ENCODE measurements at regions of chr7 and their contacts with region 1.

Region 1: GRCh38 chr7:127253281-127254162 is 781 bp upstream of the GRM8 start:
- DNase-seq: no peak
- H3K4me3 ChIP-seq: peak overlapping the region; percentile 71 to 80 (median 76)
- H3K27ac ChIP-seq: peak overlapping the region; percentile 22 to 72 (median 47)
- H3K4me1 ChIP-seq: peaks cover 15 to 36% (median 27%) of the 10 kb centered on the region in 4 donors
- H3K27me3 ChIP-seq: peaks cover 0 to 83% (median 24%) of the 10 kb centered on the region in 4 donors
- CTCF ChIP-seq: peak in 2 of 3 experiments; percentile 72 to 90
- EP300 ChIP-seq: no peak
- POLR2A ChIP-seq: no peak

Region 2: GRCh38 chr7:126803060-126803665 is 450.4 kb before region 1 on chr7:
- intact Hi-C with region 1: loop called (anchors 10 kb)
- DNase-seq: no peak
- H3K4me3 ChIP-seq: no peak overlapping the region
- H3K27ac ChIP-seq: no peak overlapping the region
- H3K4me1 ChIP-seq: no peaks in the 10 kb centered on the region
- H3K27me3 ChIP-seq: peaks cover 0 to 6% (median 0%) of the 10 kb centered on the region in 4 donors
- CTCF ChIP-seq: peak; percentile 33 to 54 (median 46)
- EP300 ChIP-seq: no peak
- POLR2A ChIP-seq: no peak

Region 3: DNA sequence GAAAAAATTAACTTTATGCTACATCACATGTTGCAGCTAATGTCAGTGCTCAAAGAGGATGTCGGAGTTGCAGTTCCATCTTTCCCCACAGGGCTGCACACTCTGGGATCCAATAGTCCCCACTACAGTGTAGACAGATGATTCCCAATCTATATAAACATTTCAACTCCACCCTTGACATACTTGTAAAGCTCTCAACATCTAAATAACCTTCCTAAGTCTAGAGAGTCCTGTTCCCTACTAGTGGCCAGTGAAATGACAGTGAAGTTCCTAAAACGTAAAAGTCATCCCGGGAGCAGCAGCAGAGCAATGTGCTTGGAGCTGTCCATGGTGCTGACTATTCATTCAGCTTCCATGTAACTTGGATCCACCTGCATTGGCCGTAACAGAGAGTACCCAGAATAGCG is 145.9 kb before region 1 on chr7:
- intact Hi-C with region 1: loop called (anchors 5 kb)
- DNase-seq: no peak
- H3K4me3 ChIP-seq: no peak overlapping the region
- H3K27ac ChIP-seq: no peak overlapping the region
- H3K4me1 ChIP-seq: no peaks in the 10 kb centered on the region
- H3K27me3 ChIP-seq: peaks cover 0 to 11% (median 0%) of the 10 kb centered on the region in 4 donors
- CTCF ChIP-seq: peak in 2 of 3 experiments; percentile 21 to 26
- EP300 ChIP-seq: no peak
- POLR2A ChIP-seq: no peak